ENCODE measurements at regions of chr7 and their contacts with region 1.

Region 1: DNA sequence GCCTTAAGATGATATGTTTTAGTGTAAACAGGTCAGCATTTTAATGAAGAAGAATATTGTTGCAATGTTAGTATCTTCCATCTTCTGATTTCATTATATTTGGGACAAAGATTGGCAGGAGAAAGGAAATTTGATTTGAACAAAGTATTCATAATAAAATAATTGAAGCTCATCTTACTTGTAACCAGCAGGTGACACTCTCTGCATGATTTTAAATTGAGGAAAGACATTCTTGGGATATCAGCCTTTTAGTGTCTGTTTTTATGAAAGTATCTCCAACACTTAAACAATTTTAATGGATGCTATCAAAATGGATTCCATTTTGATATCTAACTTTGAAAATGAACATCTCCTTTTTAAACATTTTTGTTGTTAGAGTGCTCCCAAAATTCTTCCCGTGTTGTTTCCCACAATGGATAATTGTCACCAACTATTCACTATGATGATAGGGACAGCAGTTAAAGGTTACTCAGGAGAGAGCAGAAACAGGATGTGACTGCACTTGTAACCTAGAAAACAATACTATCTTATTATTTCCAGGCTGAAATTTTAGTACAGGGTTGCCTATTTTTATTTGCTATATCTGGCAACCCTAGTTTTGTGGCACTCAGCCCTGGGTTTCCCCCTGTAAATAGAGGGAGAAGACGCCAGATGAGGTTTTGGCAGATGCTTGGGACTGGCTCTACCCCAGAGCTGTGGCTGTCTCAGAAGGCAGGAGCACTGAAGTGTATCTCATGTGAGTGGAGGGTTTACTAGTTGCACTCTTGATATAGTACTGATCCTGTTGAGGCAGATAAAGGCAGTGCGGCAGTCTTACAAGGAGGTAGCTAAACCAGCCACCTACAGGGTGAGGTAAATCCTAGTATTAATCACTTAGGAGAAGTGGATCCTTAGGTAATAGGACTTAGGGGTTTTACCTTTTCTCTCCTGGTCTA is 31.0 kb upstream of the ABCB4 start:
- DNase-seq: peak in 1 of 2 experiments; percentile 34
- H3K4me3 ChIP-seq: no peak overlapping the region
- H3K4me1 ChIP-seq: no peaks in the 10 kb centered on the region
- H3K27me3 ChIP-seq: no peaks in the 10 kb centered on the region

Region 2: DNA sequence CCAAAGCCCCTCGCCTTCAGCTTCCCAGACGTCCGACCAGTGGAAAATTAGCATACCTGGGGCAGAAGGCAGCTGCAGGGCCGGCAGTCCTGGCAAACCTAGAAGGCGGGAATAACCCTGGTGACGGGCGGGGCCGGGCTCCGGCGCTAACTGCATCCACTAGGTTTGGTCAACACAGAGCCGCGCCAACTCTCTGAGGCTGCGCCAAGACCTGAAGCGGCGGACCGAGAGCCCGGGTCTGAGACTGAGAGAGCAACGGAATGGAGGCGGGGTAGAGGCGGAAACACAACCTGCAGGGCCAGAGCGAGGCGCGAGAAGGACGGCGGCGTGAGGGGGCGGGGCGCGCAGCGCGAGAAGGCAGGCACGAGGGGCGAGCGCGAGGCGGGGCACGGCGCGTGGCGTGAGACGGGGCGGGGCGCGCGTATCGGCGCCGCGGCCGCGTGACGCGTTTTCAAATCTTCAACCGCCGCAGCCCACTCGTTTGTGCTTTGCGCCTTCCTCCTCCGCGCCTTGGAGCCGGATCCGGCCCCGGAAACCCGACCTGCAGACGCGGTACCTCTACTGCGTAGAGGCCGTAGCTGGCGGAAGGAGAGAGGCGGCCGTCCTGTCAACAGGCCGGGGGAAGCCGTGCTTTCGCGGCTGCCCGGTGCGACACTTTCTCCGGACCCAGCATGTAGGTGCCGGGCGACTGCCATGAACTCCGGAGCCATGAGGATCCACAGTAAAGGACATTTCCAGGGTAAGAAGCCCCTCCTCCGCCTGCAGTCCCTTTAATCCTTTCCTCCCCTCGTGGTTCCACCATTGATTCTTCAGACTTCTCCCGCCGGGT is 369.7 kb after region 1 on chr7 and contains the starts of genes DBF4 and SLC25A40:
- in situ Hi-C with region 1: loop called (anchors 25 kb)
- DNase-seq: peak; percentile 93 to 99
- H3K4me3 ChIP-seq: peak within 1 kb of the TSS; percentile 85
- H3K4me1 ChIP-seq: peaks cover 15% of the 10 kb centered on the region
- H3K27me3 ChIP-seq: no peaks in the 10 kb centered on the region

Region 3: GRCh38 chr7:88111136-88111743 is 604.7 kb after region 1 on chr7:
- in situ Hi-C with region 1: loop called (anchors 25 kb)
- DNase-seq: peak in 1 of 2 experiments; percentile 67
- H3K4me3 ChIP-seq: no peak overlapping the region
- H3K4me1 ChIP-seq: peaks cover 5% of the 10 kb centered on the region; the same call in 1 of the 2 replicates
- H3K27me3 ChIP-seq: no peaks in the 10 kb centered on the region

Measured in HAP-1 (cell line).